Mammary epithelial cell (primary cell): ENCODE measurements at regions of chr9 and their contacts with region 1.

Region 1: DNA sequence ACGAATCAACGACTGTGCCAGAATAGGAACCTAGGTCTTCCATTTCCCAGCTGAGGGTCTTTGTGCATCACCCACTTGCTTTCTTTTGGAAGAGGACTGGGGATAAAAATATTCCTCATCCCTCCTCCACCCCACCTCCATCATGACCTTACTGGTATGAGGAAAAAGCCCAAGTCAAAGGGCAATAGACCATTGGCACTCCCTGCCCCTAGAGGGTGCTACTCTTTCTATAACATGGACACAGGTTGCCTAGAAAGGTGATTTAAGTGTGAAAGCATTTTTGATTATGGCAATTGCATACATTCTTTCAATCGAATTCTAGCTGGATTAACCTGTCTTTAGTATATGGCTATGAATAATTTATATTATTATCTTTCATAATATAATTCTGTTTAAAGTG is 22.8 kb upstream of the ZNF618 start:
- DNase-seq: no peak
- H3K4me3 ChIP-seq: no peak overlapping the region
- H3K27ac ChIP-seq: no peak overlapping the region
- H3K4me1 ChIP-seq: no peaks in the 10 kb centered on the region
- H3K27me3 ChIP-seq: peaks cover 2% of the 10 kb centered on the region
- CTCF ChIP-seq: peak; percentile 71 to 80

Region 2: GRCh38 chr9:113943112-113944009 is 90.0 kb after region 1 on chr9:
- CTCF ChIA-PET with region 1: no interaction called
- dilution Hi-C with region 1: loop called (anchors 5 kb)
- in situ Hi-C with region 1: no loop called
- intact Hi-C with region 1: no loop called
- DNase-seq: no peak
- H3K4me3 ChIP-seq: no peak overlapping the region
- H3K27ac ChIP-seq: no peak overlapping the region
- H3K4me1 ChIP-seq: no peaks in the 10 kb centered on the region
- H3K27me3 ChIP-seq: no peaks in the 10 kb centered on the region
- CTCF ChIP-seq: no peak